ENCODE measurements at regions of chr11 and their contacts with region 1.

Region 1: GRCh38 chr11:19938169-19938856 is 222.0 kb downstream of the DBX1 start:
- DNase-seq: no peak
- ATAC-seq: peak; percentile 87
- H3K4me3 ChIP-seq: no peak overlapping the region
- H3K27ac ChIP-seq: no peak overlapping the region
- H3K4me1 ChIP-seq: peaks cover 4% of the 10 kb centered on the region; the same call in 1 of the 2 replicates
- H3K27me3 ChIP-seq: no peaks in the 10 kb centered on the region
- CTCF ChIP-seq: peak; percentile 64 to 93 (median 83)
- EP300 ChIP-seq: no peak
- POLR2A ChIP-seq: no peak
- RAD21 ChIP-seq: peak; percentile 53

Region 2: GRCh38 chr11:19912958-19913892 is 25.1 kb before region 1 on chr11:
- CTCF ChIA-PET with region 1: interaction called, 10 read pairs
- POLR2A ChIA-PET with region 1: no interaction called
- RAD21 ChIA-PET with region 1: interaction called, 3 read pairs
- SMC1A ChIA-PET with region 1: no interaction called
- in situ Hi-C with region 1: no loop called
- intact Hi-C with region 1: no loop called
- DNase-seq: no peak
- ATAC-seq: no peak
- H3K4me3 ChIP-seq: no peak overlapping the region
- H3K27ac ChIP-seq: no peak overlapping the region
- H3K4me1 ChIP-seq: no peaks in the 10 kb centered on the region
- H3K27me3 ChIP-seq: peaks cover 0 to 3% of the 10 kb centered on the region in 2 experiments; a peak in 1 of 4 replicates
- CTCF ChIP-seq: no peak
- EP300 ChIP-seq: no peak
- POLR2A ChIP-seq: no peak
- RAD21 ChIP-seq: no peak